A549 (cell line): ENCODE measurements at regions of chr11 and their contacts with region 1.

Region 1: DNA sequence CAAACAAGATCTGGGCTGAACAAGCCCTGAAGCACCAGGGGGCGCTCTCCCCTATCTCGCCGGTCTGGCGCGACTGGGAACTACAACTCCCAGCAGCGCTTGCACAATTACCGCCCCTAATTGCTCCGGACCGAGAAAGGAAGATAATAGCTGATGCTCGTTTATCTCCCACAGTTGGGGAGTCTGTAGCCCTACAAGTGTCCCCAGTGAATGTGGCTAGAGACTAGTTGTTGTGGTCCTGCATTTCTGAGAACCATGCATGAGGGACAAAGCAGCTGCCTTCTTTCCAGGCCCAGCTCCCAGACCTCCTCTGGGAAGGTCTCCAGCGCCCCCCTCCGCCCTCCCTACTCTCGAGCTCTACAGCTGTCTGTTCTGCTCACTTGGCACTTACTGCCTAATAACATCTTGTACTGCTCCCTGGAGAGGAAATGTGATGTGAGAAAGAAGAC is 34.4 kb downstream of the NRXN2 start:
- DNase-seq: peak; percentile 89 to 90
- ATAC-seq: peak; percentile 90 to 98
- H3K4me3 ChIP-seq: peak overlapping the region; percentile 39
- H3K27ac ChIP-seq: peak overlapping the region; percentile 56 to 82
- H3K4me1 ChIP-seq: no peaks in the 10 kb centered on the region
- CTCF ChIP-seq: peak; percentile 99
- EP300 ChIP-seq: no peak
- POLR2A ChIP-seq: no peak
- RAD21 ChIP-seq: peak; percentile 54 to 87

Region 2: DNA sequence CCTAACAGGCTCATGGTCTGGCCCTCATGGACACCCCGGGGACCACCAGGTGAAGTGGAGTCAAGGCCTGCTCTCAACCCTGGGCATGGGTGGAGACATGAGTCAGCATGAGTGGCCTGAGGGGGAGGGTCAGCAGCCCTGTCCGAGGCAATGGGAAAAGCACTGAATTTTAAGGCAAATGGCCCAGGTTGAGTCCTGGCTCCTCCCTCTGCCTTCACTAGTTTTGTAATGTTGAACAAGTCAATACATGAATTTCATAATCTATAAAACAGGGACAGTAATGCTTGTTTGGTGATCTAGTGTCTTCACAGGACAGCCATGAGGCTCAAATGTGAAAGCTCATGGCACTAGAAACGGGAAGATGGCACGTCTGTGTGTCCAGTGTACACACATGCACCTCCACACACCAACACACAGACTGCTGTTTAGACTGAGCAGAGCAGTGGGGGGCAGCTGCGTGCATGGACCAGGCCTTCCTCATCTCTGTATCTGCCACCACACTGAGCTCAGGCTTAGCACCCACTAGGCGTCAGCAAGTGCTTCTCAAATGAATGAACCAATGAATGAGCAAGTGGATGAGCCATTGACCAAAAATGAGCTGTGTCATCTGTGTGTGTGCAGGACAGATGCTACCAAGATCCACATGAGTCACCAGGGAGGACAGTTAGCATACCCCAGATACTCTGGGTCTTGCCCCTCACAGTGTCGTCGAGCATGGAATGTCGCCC is 29.0 kb before region 1 on chr11:
- CTCF ChIA-PET with region 1: interaction called, 20 read pairs
- POLR2A ChIA-PET with region 1: no interaction called
- DNase-seq: peak; percentile 64 to 73
- ATAC-seq: peak; percentile 42 to 56
- H3K4me3 ChIP-seq: no peak overlapping the region
- H3K27ac ChIP-seq: peak overlapping the region; percentile 60 to 67
- H3K4me1 ChIP-seq: peaks cover 27% of the 10 kb centered on the region
- CTCF ChIP-seq: no peak
- EP300 ChIP-seq: no peak
- POLR2A ChIP-seq: no peak
- RAD21 ChIP-seq: 0 out of 5 replicates have a peak, but pooled peaks of 1 of the 2 experiments have one; percentile 2

Region 3: DNA sequence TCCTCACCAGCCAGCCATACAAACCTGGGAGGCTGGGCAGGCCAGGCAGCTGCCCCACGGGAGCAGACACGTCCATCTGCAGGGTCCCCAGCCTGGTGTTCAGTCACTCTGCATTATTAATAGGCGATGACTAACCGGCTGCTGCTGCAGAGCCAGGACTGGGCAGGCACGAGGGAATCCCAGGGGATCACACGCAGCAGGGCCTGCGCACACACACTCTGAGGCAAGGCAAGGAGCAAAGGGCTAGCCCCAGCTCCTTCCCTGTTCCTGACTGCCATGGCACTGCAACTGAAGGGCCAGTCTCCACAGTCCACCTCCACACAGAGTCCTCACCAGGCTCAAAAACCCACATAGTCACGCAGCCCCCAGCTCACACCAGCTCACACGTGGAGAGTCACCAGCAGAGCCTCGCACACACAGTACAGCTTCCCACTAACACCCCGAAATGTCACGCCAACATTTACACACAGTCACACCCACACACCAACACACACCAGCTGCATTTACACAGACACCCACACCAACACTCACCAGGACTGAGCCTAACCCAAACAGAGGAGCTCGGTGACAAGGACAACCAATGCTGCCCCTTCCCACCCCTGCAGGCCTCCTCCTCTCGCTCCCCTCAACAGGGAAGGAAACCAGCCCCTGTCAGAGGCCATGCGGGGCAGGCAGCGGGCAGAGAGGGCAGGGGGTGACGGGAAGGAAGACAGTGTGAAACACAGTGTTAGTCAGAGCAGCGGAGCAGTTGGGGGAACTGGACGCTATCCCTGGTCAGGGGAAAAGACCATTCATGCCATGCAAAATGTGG is 12.9 kb before region 1 on chr11:
- CTCF ChIA-PET with region 1: interaction called, 52 read pairs
- POLR2A ChIA-PET with region 1: no interaction called
- DNase-seq: peak; percentile 61 to 64
- ATAC-seq: peak; percentile 84 to 91
- H3K4me3 ChIP-seq: no peak overlapping the region
- H3K27ac ChIP-seq: peak overlapping the region in 1 of 2 experiments; percentile 68; a peak in 3 of 6 replicates
- H3K4me1 ChIP-seq: peaks cover 12% of the 10 kb centered on the region
- CTCF ChIP-seq: no peak
- EP300 ChIP-seq: no peak
- POLR2A ChIP-seq: no peak
- RAD21 ChIP-seq: no peak

Region 4: GRCh38 chr11:64713031-64713780 is 24.6 kb after region 1 on chr11:
- CTCF ChIA-PET with region 1: interaction called, 88 read pairs
- POLR2A ChIA-PET with region 1: no interaction called
- DNase-seq: peak in 1 of 2 experiments; percentile 48
- ATAC-seq: 0 out of 6 replicates have a peak, but pooled peaks of 1 of the 2 experiments have one; percentile 4
- H3K4me3 ChIP-seq: peak overlapping the region; percentile 33
- H3K27ac ChIP-seq: peak overlapping the region in 1 of 2 experiments; percentile 20; a peak in 1 of 6 replicates
- H3K4me1 ChIP-seq: peaks cover 13% of the 10 kb centered on the region; the same call in 2 of the 3 replicates
- CTCF ChIP-seq: no peak
- EP300 ChIP-seq: no peak
- POLR2A ChIP-seq: no peak
- RAD21 ChIP-seq: no peak

Region 5: GRCh38 chr11:64734811-64735724 is 46.5 kb after region 1 on chr11:
- CTCF ChIA-PET with region 1: interaction called, 57 read pairs
- POLR2A ChIA-PET with region 1: no interaction called
- DNase-seq: no peak
- ATAC-seq: peak in 1 of 2 experiments; percentile 31; a peak in 3 of 6 replicates
- H3K4me3 ChIP-seq: no peak overlapping the region
- H3K27ac ChIP-seq: no peak overlapping the region
- H3K4me1 ChIP-seq: no peaks in the 10 kb centered on the region
- CTCF ChIP-seq: no peak
- EP300 ChIP-seq: no peak
- POLR2A ChIP-seq: no peak
- RAD21 ChIP-seq: no peak

Region 6: DNA sequence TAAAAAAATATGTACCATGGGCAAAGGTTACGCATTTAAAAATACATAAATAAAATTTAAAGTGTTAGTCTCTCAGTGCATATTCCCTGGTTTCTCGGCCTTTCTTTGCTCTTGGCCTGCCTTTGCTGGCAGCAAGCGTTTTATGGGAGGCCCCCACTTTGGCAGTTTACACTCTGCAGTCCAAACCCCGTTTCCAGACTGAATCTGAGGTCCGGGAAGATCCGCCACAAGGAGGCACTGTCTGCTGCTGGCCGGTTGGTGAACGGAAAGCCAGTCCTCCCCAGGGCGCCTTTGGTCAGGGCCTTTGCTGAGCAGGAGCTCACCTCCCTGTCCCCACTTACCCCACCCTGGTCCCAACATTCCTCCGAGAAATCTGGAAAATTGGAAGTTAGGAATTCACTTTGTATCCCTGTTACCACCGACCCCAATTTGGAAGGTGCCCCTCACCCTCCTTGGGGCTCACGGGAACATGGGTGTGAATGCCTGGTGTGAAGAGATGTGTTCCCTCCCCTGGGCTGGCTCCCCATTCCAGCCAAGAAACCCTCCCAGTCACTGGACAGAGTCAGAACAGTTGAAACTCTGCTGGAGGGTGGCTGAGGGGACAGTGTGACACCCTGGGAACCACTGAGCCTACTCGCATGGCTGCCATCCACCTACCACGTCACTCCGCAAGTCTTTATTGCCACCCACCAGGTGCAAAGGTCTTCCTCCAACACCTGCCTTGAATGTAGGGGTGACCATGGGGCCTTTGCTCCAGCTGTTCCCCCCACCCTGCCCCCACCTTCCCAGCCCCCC is 99.2 kb after region 1 on chr11:
- CTCF ChIA-PET with region 1: no interaction called
- POLR2A ChIA-PET with region 1: no interaction called
- DNase-seq: peak; percentile 72 to 89
- ATAC-seq: peak; percentile 74 to 93
- H3K4me3 ChIP-seq: no peak overlapping the region
- H3K27ac ChIP-seq: peak overlapping the region in 1 of 2 experiments; percentile 39; a peak in 1 of 6 replicates
- H3K4me1 ChIP-seq: no peaks in the 10 kb centered on the region
- CTCF ChIP-seq: peak; percentile 81
- EP300 ChIP-seq: no peak
- POLR2A ChIP-seq: no peak
- RAD21 ChIP-seq: peak; percentile 75 to 84